HCT116 (cell line): ENCODE measurements at regions of chr4 and their contacts with region 1.

Region 1: GRCh38 chr4:100093091-100093866 is 97.0 kb downstream of the DDIT4L start:
- DNase-seq: peak; percentile 93
- ATAC-seq: peak; percentile 94
- H3K4me3 ChIP-seq: no peak overlapping the region
- H3K27ac ChIP-seq: no peak overlapping the region
- H3K4me1 ChIP-seq: peaks cover 7 to 26% of the 10 kb centered on the region in 2 experiments; a peak in 3 of 4 replicates
- H3K27me3 ChIP-seq: no peaks in the 10 kb centered on the region
- CTCF ChIP-seq: peak; percentile 71 to 86 (median 80)
- POLR2A ChIP-seq: no peak
- RAD21 ChIP-seq: peak; percentile 91

Region 2: GRCh38 chr4:100049872-100050271 is 43.4 kb before region 1 on chr4:
- CTCF ChIA-PET with region 1: no interaction called
- POLR2A ChIA-PET with region 1: no interaction called
- RAD21 ChIA-PET with region 1: no interaction called
- intact Hi-C with region 1: no loop called
- DNase-seq: no peak
- ATAC-seq: no peak
- H3K4me3 ChIP-seq: no peak overlapping the region
- H3K27ac ChIP-seq: no peak overlapping the region
- H3K4me1 ChIP-seq: no peaks in the 10 kb centered on the region
- H3K27me3 ChIP-seq: no peaks in the 10 kb centered on the region
- CTCF ChIP-seq: no peak
- POLR2A ChIP-seq: no peak
- RAD21 ChIP-seq: no peak

Region 3: DNA sequence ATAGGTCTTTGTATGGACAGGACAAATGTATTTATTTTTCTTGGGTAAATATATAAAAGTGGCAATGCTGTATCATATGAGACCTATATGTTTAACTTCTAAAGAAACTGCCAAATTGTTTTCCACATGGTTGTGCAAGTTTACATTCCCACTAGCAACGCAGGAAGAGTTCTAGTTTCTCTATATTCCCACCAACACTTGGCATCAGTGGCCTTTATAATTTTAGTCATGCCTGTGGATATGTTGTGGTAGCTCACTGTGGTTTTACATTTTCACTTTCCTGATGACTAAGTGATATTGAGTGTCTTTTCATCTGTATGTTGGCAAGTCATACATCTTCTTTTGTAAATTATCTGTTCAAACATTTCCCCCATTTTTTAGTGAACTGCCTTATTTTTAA is 298.6 kb after region 1 on chr4:
- CTCF ChIA-PET with region 1: no interaction called
- POLR2A ChIA-PET with region 1: no interaction called
- RAD21 ChIA-PET with region 1: no interaction called
- intact Hi-C with region 1: loop called (anchors 10 kb)
- DNase-seq: no peak
- ATAC-seq: no peak
- H3K4me3 ChIP-seq: no peak overlapping the region
- H3K27ac ChIP-seq: no peak overlapping the region
- H3K4me1 ChIP-seq: no peaks in the 10 kb centered on the region
- H3K27me3 ChIP-seq: no peaks in the 10 kb centered on the region
- CTCF ChIP-seq: no peak
- POLR2A ChIP-seq: no peak
- RAD21 ChIP-seq: no peak

Region 4: GRCh38 chr4:100742045-100742444 is 648.8 kb after region 1 on chr4:
- CTCF ChIA-PET with region 1: interaction called, 12 read pairs
- POLR2A ChIA-PET with region 1: interaction called, 4 read pairs
- RAD21 ChIA-PET with region 1: no interaction called
- intact Hi-C with region 1: loop called (anchors 2 kb)
- DNase-seq: peak; percentile 63
- ATAC-seq: peak; percentile 62
- H3K4me3 ChIP-seq: no peak overlapping the region
- H3K27ac ChIP-seq: no peak overlapping the region
- H3K4me1 ChIP-seq: peaks cover 12 to 19% of the 10 kb centered on the region in 2 experiments
- H3K27me3 ChIP-seq: no peaks in the 10 kb centered on the region
- CTCF ChIP-seq: peak; percentile 34 to 64 (median 59); a peak in 5 of 6 replicates
- POLR2A ChIP-seq: no peak
- RAD21 ChIP-seq: peak; percentile 71